SK-N-SH (cell line): ENCODE measurements at regions of chr14 and their contacts with region 1.

Region 1: DNA sequence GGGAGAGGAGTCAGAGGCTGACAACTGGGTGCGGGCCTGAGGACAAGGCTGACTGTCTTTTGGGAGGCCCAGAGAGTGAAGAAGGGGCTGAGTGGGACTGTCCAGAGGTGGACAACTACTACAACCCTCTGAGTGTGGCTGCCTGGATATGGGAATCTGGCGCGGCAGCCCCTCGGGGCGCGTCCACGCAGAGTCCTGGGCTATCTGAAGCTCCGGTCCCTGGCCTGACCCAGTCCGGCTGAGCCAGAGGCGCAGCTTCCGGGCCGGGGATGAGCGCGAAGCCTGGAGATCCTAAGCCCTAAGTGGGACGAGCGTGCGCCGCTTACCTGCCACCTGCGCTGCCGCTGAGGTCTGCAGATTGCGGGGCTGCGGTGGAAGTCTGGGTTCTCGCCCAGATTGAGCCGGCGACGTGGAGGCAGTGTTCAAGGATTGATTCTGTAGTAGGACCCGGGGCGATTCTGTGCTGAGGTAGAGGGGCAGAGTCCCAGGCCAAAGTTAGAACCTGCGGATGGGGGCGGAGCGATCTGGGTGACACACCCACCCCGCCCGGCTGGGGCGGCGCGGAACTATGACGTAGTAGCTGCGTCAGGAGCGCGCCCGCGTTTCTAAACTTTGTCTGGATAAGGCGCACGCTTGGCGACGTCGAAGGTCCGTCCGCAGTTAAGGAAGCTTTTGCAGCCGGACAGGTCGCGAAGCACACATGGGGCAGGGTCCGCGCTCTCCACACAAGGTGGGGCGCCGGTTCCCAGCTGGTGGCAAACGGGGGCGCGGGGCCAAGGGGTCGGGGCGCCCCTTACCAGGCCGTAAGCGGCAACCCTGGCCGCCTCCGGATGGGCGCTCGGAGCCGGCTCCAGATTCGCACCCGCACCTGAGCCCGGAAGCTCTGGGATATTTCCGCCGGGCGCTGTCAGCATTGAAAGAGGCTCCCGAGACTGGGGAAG is at the starts of genes DHRS1 and NOP9:
- DNase-seq: peak; percentile 97
- H3K4me3 ChIP-seq: peak within 1 kb of the TSS; percentile 92 to 93
- H3K27ac ChIP-seq: peak within 1 kb of the TSS; percentile 63 to 69; a peak in 3 of 4 replicates
- H3K4me1 ChIP-seq: peaks cover 13 to 14% of the 10 kb centered on the region in 2 experiments
- H3K27me3 ChIP-seq: no peaks in the 10 kb centered on the region
- CTCF ChIP-seq: no peak
- EP300 ChIP-seq: no peak
- RAD21 ChIP-seq: no peak
- polyA plus RNA-seq, gene DHRS1: 65.4 and 71.7 TPM in 2 replicates
- polyA plus RNA-seq, gene NOP9: 11.9 and 17.2 TPM in 2 replicates

Region 2: GRCh38 chr14:24232121-24232644 is 67.3 kb before region 1 on chr14 and contains the start of gene NEDD8:
- CTCF ChIA-PET with region 1: interaction called, 191 read pairs
- POLR2A ChIA-PET with region 1: no interaction called
- DNase-seq: peak; percentile 88
- H3K4me3 ChIP-seq: peak within 1 kb of the TSS; percentile 82 to 93
- H3K27ac ChIP-seq: peak within 1 kb of the TSS; percentile 89 to 99
- H3K4me1 ChIP-seq: peaks cover 19 to 24% of the 10 kb centered on the region in 2 experiments; a peak in 3 of 4 replicates
- H3K27me3 ChIP-seq: no peaks in the 10 kb centered on the region
- CTCF ChIP-seq: no peak
- EP300 ChIP-seq: no peak
- RAD21 ChIP-seq: no peak
- polyA plus RNA-seq, gene NEDD8: 465 and 534 TPM in 2 replicates

Region 3: DNA sequence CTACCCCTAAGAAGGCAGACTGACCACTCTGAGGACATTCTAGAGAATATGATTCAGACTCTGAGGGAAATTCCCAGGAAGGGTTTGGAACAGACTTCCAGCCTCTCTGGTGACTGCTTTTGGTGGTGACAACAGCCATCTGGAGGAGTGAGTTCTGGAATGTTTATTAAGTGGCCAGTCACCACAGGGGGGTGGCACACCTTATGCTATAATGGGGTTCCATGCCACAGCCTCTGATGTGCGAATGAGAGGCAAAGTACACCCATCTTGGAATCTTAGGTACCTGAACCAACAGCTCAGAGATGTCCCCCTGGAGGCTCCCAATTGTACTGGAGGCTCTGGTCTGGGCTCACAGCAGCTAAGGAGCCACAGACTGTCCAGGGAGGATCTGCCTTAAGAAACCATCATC is 47.6 kb before region 1 on chr14:
- CTCF ChIA-PET with region 1: interaction called, 191 read pairs
- POLR2A ChIA-PET with region 1: no interaction called
- DNase-seq: no peak
- H3K4me3 ChIP-seq: no peak overlapping the region
- H3K27ac ChIP-seq: no peak overlapping the region
- H3K4me1 ChIP-seq: no peaks in the 10 kb centered on the region
- H3K27me3 ChIP-seq: no peaks in the 10 kb centered on the region
- CTCF ChIP-seq: no peak; the same call in 1 of the 2 replicates
- EP300 ChIP-seq: no peak
- RAD21 ChIP-seq: no peak

Region 4: DNA sequence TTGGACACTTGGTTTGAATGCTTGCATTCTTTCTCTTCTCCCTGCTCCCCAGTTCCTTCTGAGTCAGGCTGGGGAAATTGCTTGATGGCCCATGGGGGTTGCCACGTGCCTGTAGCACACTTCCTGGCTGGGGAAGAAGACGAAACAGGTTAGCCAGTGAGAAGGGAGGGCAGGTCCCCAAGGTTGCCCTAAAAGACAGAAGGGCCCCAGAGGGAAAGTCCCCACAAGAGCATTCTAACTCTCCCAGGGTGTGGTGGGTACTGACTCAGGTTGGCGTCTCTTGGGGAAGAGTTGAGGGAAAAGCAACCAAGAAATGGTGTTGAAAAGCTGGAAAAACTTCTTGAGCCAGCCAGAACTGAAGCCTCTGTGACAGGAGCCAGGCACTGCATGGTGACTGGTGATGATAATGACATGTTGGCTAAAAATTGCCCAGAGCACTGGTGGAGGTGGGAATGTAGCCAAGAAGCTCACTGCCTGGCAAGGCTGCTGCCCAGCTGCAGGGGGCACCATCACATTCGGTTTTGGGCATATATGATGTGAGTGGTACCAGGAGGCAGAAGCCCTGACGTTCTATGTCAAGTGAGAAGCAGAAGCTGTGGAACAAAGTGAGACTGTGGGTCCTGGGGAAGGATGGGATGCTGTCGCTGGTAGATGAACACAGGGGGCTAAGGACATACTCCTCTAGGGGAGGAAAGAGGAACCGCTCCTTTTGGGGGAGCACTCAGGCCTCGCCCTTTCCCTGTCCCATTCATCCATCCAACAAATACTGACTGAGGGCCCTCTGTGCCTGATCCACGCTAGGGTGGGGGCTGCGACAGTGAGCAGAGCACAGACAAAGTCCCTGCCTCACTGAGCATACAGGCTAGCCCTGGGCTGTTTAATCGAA is 20.0 kb before region 1 on chr14:
- CTCF ChIA-PET with region 1: interaction called, 87 read pairs
- POLR2A ChIA-PET with region 1: no interaction called
- DNase-seq: peak; percentile 67
- H3K4me3 ChIP-seq: no peak overlapping the region
- H3K27ac ChIP-seq: no peak overlapping the region
- H3K4me1 ChIP-seq: peaks cover 0 to 10% of the 10 kb centered on the region in 2 experiments; a peak in 1 of 4 replicates
- H3K27me3 ChIP-seq: no peaks in the 10 kb centered on the region
- CTCF ChIP-seq: peak; percentile 47
- EP300 ChIP-seq: no peak; a peak in 1 of 4 replicates
- RAD21 ChIP-seq: peak; percentile 60

Region 5: GRCh38 chr14:24324024-24324423 is 24.5 kb after region 1 on chr14:
- CTCF ChIA-PET with region 1: no interaction called
- POLR2A ChIA-PET with region 1: no interaction called
- DNase-seq: no peak
- H3K4me3 ChIP-seq: no peak overlapping the region
- H3K27ac ChIP-seq: no peak overlapping the region
- H3K4me1 ChIP-seq: no peaks in the 10 kb centered on the region
- H3K27me3 ChIP-seq: peaks cover 11% of the 10 kb centered on the region; the same call in 1 of the 2 replicates
- CTCF ChIP-seq: no peak
- EP300 ChIP-seq: no peak
- RAD21 ChIP-seq: no peak